Activated naive CD4-positive, alpha-beta T cell treated with anti-CD3 and anti-CD28 coated beads for 36 hours (primary cell): ENCODE measurements at regions of chr6 and their contacts with region 1.

Region 1: GRCh38 chr6:52635049-52635577 is 35.8 kb upstream of the TMEM14A start:
- DNase-seq: peak; percentile 75
- H3K4me3 Mint-ChIP-seq: peak overlapping the region; percentile 25
- H3K27ac Mint-ChIP-seq: peak overlapping the region; percentile 67
- H3K4me1 Mint-ChIP-seq: peaks cover 18% of the 10 kb centered on the region
- H3K27me3 Mint-ChIP-seq: peaks cover 5% of the 10 kb centered on the region

Region 2: GRCh38 chr6:52157301-52157941 is 477.7 kb before region 1 on chr6:
- CTCF ChIA-PET with region 1: no interaction called
- intact Hi-C with region 1: loop called (anchors 1 kb)
- DNase-seq: peak; percentile 50
- H3K4me3 Mint-ChIP-seq: no peak overlapping the region
- H3K27ac Mint-ChIP-seq: peak overlapping the region; percentile 74
- H3K4me1 Mint-ChIP-seq: peaks cover 53% of the 10 kb centered on the region
- H3K27me3 Mint-ChIP-seq: peaks cover 22% of the 10 kb centered on the region

Region 3: GRCh38 chr6:52297433-52297832 is 337.7 kb before region 1 on chr6:
- CTCF ChIA-PET with region 1: no interaction called
- intact Hi-C with region 1: loop called (anchors 1 kb)
- DNase-seq: peak; percentile 51
- H3K4me3 Mint-ChIP-seq: no peak overlapping the region
- H3K27ac Mint-ChIP-seq: peak overlapping the region; percentile 60
- H3K4me1 Mint-ChIP-seq: peaks cover 35% of the 10 kb centered on the region
- H3K27me3 Mint-ChIP-seq: no peaks in the 10 kb centered on the region

Region 4: GRCh38 chr6:52517502-52518278 is 117.4 kb before region 1 on chr6:
- CTCF ChIA-PET with region 1: no interaction called
- intact Hi-C with region 1: loop called (anchors 1 kb)
- DNase-seq: peak; percentile 78
- H3K4me3 Mint-ChIP-seq: no peak overlapping the region
- H3K27ac Mint-ChIP-seq: peak overlapping the region; percentile 48
- H3K4me1 Mint-ChIP-seq: peaks cover 7% of the 10 kb centered on the region
- H3K27me3 Mint-ChIP-seq: no peaks in the 10 kb centered on the region

Region 5: DNA sequence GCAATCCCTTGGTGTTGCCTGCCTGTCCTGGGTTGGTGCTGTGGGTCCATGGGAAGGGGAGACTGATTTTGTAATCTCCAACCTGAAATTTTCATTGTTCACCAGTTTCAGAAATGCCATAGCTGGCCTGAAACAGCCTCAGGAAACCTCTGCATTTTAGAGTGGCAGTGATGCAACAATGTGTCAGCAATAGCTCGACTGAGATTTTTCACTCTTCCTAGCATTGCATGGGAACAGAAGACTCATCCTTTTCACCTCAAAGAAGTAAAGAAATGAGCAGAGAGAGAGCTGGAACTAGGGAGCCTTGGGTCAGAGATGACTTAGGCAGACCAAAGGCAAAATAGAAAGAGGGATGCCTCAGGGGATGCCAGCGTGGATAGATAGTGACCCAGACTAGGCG is 12.1 kb after region 1 on chr6:
- CTCF ChIA-PET with region 1: interaction called, 81 read pairs
- intact Hi-C with region 1: loop called (anchors 1 kb)
- DNase-seq: no peak
- H3K4me3 Mint-ChIP-seq: no peak overlapping the region
- H3K27ac Mint-ChIP-seq: no peak overlapping the region
- H3K4me1 Mint-ChIP-seq: peaks cover 13% of the 10 kb centered on the region
- H3K27me3 Mint-ChIP-seq: no peaks in the 10 kb centered on the region

Region 6: DNA sequence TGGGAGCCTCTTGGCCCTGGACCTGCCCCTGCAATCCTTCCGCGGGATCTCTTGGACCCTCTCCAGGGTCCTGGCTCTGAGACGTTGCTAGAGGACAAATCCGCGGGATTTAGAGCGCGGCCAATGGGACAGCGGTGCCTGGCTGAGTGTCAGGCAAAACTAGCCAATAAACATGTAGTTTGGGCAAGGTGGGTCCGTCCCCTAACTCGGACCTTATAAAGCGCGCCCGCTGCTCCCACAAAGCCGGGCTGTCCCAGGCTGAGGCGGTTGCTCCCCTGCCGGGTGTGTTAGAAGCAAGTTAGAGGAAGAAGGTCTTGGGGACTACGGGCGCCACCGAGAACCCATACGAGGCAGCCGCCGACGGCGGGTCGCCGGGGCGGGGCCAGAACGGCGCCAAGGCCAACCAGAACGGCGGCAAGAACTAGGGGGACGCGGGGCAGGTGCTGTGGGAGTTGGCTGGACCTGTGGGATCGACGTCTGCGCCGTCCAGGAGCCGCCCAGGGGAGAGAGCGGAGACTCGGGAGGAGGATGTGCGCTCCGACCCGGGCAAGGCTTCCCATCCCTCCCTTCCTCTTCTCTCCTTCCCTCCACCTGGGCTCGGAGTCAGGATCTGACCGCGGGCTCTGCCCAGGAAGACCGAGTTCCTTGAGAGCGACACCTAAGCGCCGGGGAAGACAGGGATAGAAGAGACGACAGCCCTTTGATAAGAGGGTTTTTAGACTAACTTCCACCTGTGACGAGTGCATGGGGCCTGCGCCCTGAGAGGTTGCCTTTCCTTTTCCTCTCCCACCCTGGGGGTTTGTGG is 29.3 kb after region 1 on chr6:
- CTCF ChIA-PET with region 1: interaction called, 5 read pairs
- intact Hi-C with region 1: loop called (anchors 1 kb)
- DNase-seq: peak; percentile 86
- H3K4me3 Mint-ChIP-seq: no peak overlapping the region
- H3K27ac Mint-ChIP-seq: no peak overlapping the region
- H3K4me1 Mint-ChIP-seq: peaks cover 3% of the 10 kb centered on the region
- H3K27me3 Mint-ChIP-seq: no peaks in the 10 kb centered on the region